ENCODE measurements at regions of chr1 and their contacts with region 1.

Region 1: DNA sequence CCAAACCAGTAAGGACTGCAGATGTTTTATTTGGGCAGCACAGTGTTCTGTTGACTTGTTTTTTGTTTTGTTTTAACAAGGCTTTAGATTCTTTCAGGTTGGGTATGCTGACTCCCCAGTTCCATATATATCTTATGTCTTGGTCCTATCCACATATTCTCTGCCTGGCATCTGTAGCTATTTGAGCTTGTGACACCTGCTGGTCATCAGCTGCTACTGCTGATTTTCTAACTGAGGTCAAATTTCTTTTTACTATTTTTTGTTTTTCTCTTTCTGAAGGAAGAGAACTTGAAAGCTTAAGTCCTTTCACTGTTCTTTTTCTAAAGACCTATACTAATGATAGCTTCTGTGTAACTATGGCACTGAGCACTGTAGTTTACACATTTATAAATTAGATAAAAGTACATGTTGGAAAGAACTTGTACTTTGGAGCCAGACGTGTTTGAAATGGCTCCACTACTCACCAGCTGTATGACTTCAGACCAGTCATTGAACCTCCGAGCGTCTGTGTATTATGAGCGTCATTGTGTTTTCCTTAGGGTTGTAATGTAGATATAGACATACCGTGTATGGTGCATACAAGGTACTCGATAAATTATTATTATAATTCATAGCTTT is 109.4 kb downstream of the NRDC start:
- DNase-seq: peak in 4 of 5 donors; percentile 28 to 40 (median 36)
- H3K4me3 ChIP-seq: no peak overlapping the region
- H3K4me3 Mint-ChIP-seq: no peak overlapping the region
- H3K27ac ChIP-seq: no peak overlapping the region
- H3K27ac Mint-ChIP-seq: peak overlapping the region in 4 of 7 donors; percentile 32 to 72 (median 56)
- H3K4me1 ChIP-seq: no peaks in the 10 kb centered on the region
- H3K4me1 Mint-ChIP-seq: peaks cover 5 to 18% (median 7%) of the 10 kb centered on the region in 4 donors
- H3K27me3 ChIP-seq: no peaks in the 10 kb centered on the region
- H3K27me3 Mint-ChIP-seq: no peaks in the 10 kb centered on the region

Region 2: DNA sequence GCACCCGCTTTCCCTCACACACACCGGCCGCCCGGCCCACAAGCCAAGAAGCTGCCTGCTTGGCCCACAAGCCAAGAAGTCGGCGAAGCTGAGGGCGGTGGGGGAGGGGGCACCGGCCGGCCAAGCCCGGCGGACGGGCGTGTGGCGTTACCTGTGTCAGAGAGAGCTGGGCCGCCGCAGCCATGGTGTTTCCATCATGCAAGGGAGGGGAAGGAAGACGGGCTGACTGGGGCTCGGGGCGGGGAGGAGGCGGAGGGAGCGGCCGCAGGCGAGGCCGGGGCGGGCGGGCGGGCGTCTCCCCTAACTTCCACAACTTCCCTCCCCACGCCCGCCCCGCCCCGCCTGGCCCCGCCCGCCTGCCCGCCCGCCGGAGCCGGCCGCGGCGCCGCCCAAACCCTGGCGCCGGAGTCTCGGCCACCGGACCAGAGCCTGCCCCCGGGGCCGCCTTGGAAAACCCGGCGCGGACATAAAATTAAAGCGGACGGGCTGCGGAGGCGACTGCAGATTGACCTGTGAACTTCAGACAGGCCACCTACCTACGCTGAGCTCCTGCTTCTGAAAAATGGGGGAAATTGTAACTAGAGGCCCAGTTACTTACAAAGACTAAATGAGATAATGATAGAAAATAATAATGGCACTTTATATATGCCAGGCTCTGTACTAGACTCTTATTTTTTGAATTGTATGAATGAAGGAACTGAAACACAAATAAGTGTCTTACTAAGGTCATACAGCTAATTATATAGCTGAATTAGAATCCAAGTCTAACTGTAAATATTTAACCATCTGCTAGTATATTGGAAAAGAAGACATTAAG is 249.8 kb before region 1 on chr1 and contains the start of gene EPS15:
- CTCF ChIA-PET with region 1: no interaction called
- POLR2A ChIA-PET with region 1: no interaction called
- intact Hi-C with region 1: no loop called
- DNase-seq: peak; percentile 79 to 89 (median 83)
- H3K4me3 ChIP-seq: peak within 1 kb of the TSS; percentile 92 to 93
- H3K4me3 Mint-ChIP-seq: peak within 1 kb of the TSS; percentile 90 to 98 (median 97)
- H3K27ac ChIP-seq: peak within 1 kb of the TSS; percentile 69
- H3K27ac Mint-ChIP-seq: peak within 1 kb of the TSS; percentile 90 to 97 (median 95)
- H3K4me1 ChIP-seq: peaks cover 54% of the 10 kb centered on the region
- H3K4me1 Mint-ChIP-seq: peaks cover 44 to 62% (median 51%) of the 10 kb centered on the region in 4 donors
- H3K27me3 ChIP-seq: no peaks in the 10 kb centered on the region
- H3K27me3 Mint-ChIP-seq: no peaks in the 10 kb centered on the region
- total RNA-seq, gene EPS15: 91.5 to 92.3 TPM

Region 3: GRCh38 chr1:51569284-51570062 is 199.6 kb before region 1 on chr1:
- CTCF ChIA-PET with region 1: interaction called, 3 read pairs
- POLR2A ChIA-PET with region 1: no interaction called
- intact Hi-C with region 1: loop called (anchors 1 kb)
- DNase-seq: peak; percentile 38 to 68 (median 45)
- H3K4me3 ChIP-seq: peak overlapping the region in 1 of 2 donors; percentile 33
- H3K4me3 Mint-ChIP-seq: peak overlapping the region; percentile 40 to 81 (median 56)
- H3K27ac ChIP-seq: peak overlapping the region; percentile 27
- H3K27ac Mint-ChIP-seq: peak overlapping the region; percentile 76 to 90 (median 85)
- H3K4me1 ChIP-seq: peaks cover 44% of the 10 kb centered on the region
- H3K4me1 Mint-ChIP-seq: peaks cover 22 to 43% (median 34%) of the 10 kb centered on the region in 4 donors
- H3K27me3 ChIP-seq: no peaks in the 10 kb centered on the region
- H3K27me3 Mint-ChIP-seq: no peaks in the 10 kb centered on the region

Region 4: DNA sequence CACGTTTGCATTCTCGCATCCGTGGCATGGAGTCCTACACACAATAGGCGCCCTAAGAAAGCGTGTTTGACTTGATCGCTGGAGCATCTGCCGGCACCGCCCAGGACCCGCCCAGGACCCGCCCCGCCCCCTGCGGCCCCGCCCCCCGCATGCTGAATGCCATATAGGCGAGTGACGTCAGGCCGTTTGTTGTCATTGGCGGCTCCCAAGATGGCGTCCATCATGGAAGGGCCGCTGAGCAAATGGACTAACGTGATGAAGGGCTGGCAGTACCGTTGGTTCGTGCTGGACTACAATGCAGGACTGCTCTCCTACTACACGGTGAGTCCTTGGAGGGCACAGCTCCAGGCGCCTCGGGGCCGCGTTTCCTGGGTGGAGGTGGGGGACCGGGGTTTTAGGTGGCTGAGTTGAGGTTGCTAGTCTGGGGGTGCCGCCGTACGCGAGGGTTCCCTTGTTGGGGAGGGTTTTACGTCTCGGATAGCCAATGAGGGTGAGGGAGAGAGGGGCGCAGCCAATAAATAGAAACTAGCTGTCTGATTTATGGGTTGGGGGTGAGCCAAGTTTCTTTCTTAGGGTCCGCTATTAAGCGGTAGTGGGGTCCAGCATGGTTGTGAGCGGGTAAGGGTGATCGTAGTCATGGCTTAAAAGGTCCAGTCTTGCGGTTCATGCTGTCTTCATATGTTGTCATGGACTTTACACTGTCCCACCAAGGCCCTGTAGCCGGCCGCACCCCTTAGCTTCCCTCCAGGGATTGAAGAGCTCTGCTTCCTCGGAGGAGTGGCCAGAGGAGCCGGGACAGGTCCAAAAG is 152.0 kb before region 1 on chr1 and contains the start of gene OSBPL9:
- CTCF ChIA-PET with region 1: interaction called, 6 read pairs
- POLR2A ChIA-PET with region 1: no interaction called
- intact Hi-C with region 1: loop called (anchors 5 kb)
- DNase-seq: peak; percentile 84 to 91 (median 87)
- H3K4me3 ChIP-seq: peak within 1 kb of the TSS; percentile 76 to 79
- H3K4me3 Mint-ChIP-seq: peak within 1 kb of the TSS; percentile 100
- H3K27ac ChIP-seq: peak within 1 kb of the TSS; percentile 72
- H3K27ac Mint-ChIP-seq: peak within 1 kb of the TSS; percentile 93 to 100 (median 99)
- H3K4me1 ChIP-seq: peaks cover 32% of the 10 kb centered on the region
- H3K4me1 Mint-ChIP-seq: peaks cover 24 to 49% (median 37%) of the 10 kb centered on the region in 4 donors
- H3K27me3 ChIP-seq: no peaks in the 10 kb centered on the region
- H3K27me3 Mint-ChIP-seq: peaks cover under 1 to 1% of the 10 kb centered on the region in 2 donors
- total RNA-seq, gene OSBPL9: 45.1 to 46.9 TPM

Region 5: DNA sequence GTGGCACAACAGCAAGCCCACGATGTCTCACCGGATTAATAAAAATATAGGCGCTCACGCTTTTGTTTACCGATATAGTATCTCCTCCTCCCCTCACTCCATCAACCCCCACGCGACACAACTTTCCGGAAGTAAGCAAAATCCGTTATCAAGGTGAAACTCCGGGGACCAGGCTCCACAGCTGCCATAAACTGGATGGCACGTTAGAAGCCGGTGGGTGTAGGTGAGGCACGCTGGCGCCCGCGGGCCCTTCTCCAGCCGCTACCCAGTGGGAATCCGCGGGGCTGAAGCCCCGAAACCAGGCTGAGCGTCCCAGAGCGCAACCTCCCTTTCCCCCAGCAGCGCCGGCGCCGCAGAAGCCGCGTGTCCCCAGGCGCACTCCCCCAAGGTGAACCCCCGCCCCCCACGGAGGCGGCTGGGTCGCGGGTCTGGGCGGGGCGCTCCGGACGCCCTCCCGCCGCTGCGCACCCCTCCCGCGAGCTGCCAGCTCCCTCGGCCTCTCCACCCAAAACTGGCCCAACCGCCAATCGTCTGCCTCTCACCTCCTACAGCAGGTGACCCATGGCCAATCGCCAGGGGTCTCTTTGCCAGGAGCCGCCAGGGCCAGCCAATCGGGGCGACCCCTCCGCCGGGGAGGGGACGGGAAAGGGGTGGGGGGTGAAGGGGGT is 39.8 kb before region 1 on chr1:
- CTCF ChIA-PET with region 1: interaction called, 21 read pairs
- POLR2A ChIA-PET with region 1: no interaction called
- intact Hi-C with region 1: loop called (anchors 5 kb)
- DNase-seq: peak; percentile 92 to 94 (median 93)
- H3K4me3 ChIP-seq: peak overlapping the region; percentile 89 to 96
- H3K4me3 Mint-ChIP-seq: peak overlapping the region; percentile 94 to 97 (median 94)
- H3K27ac ChIP-seq: peak overlapping the region; percentile 68
- H3K27ac Mint-ChIP-seq: peak overlapping the region; percentile 67 to 96 (median 94)
- H3K4me1 ChIP-seq: peaks cover 37% of the 10 kb centered on the region
- H3K4me1 Mint-ChIP-seq: peaks cover 30 to 54% (median 39%) of the 10 kb centered on the region in 4 donors
- H3K27me3 ChIP-seq: no peaks in the 10 kb centered on the region
- H3K27me3 Mint-ChIP-seq: no peaks in the 10 kb centered on the region

Region 6: GRCh38 chr1:51784997-51785421 is 15.9 kb after region 1 on chr1:
- CTCF ChIA-PET with region 1: interaction called, 21 read pairs
- POLR2A ChIA-PET with region 1: interaction called, 6 read pairs
- intact Hi-C with region 1: no loop called
- DNase-seq: no peak
- H3K4me3 ChIP-seq: no peak overlapping the region
- H3K4me3 Mint-ChIP-seq: no peak overlapping the region
- H3K27ac ChIP-seq: no peak overlapping the region
- H3K27ac Mint-ChIP-seq: peak overlapping the region in 4 of 7 donors; percentile 8 to 76 (median 44)
- H3K4me1 ChIP-seq: no peaks in the 10 kb centered on the region
- H3K4me1 Mint-ChIP-seq: no peaks in the 10 kb centered on the region
- H3K27me3 ChIP-seq: no peaks in the 10 kb centered on the region
- H3K27me3 Mint-ChIP-seq: no peaks in the 10 kb centered on the region

Region 7: GRCh38 chr1:51819810-51820209 is 50.7 kb after region 1 on chr1:
- CTCF ChIA-PET with region 1: no interaction called
- POLR2A ChIA-PET with region 1: no interaction called
- intact Hi-C with region 1: no loop called
- DNase-seq: no peak
- H3K4me3 ChIP-seq: no peak overlapping the region
- H3K4me3 Mint-ChIP-seq: no peak overlapping the region
- H3K27ac ChIP-seq: no peak overlapping the region
- H3K27ac Mint-ChIP-seq: peak overlapping the region in 1 of 7 donors; percentile 57
- H3K4me1 ChIP-seq: no peaks in the 10 kb centered on the region
- H3K4me1 Mint-ChIP-seq: peaks cover 0 to 2% (median 0%) of the 10 kb centered on the region in 4 donors
- H3K27me3 ChIP-seq: no peaks in the 10 kb centered on the region
- H3K27me3 Mint-ChIP-seq: no peaks in the 10 kb centered on the region